Activated T-helper 2 cell treated with anti-CD3 and anti-CD28 coated beads, Interferon-gamma antibody, Interleukin-2, Interleukin-4, amounts not matched to agents 10 μg/mL and 5 μg/mL and 100 μg/mL, durations not matched to agents 14 hours and 24 hours and 36 hours (primary cell): ENCODE measurements at regions of chrX and their contacts with region 1.

Region 1: DNA sequence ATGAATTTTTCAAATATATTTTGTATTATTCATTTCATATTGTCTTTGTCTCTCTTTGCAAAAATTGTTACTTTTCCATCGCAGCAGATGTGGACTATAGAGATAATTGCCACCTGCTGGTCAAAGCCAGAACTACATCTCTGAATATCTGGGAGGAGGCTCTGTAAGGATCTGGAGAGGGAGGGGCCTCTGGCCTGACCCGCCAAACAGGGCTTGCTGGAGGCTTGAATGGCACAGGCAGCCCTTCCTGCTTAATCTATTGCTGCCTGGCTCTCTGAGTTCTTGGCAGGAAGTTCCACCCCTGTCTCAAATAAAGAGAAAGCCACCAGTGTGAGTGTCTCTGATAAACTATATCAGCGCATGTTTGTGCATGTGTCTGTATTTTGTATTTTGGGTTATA is 132.4 kb downstream of the ZMAT1 start:
- DNase-seq: peak; percentile 71
- H3K4me3 Mint-ChIP-seq: peak overlapping the region; percentile 70
- H3K27ac Mint-ChIP-seq: peak overlapping the region; percentile 62
- H3K4me1 Mint-ChIP-seq: peaks cover 2% of the 10 kb centered on the region
- H3K27me3 Mint-ChIP-seq: no peaks in the 10 kb centered on the region

Region 2: DNA sequence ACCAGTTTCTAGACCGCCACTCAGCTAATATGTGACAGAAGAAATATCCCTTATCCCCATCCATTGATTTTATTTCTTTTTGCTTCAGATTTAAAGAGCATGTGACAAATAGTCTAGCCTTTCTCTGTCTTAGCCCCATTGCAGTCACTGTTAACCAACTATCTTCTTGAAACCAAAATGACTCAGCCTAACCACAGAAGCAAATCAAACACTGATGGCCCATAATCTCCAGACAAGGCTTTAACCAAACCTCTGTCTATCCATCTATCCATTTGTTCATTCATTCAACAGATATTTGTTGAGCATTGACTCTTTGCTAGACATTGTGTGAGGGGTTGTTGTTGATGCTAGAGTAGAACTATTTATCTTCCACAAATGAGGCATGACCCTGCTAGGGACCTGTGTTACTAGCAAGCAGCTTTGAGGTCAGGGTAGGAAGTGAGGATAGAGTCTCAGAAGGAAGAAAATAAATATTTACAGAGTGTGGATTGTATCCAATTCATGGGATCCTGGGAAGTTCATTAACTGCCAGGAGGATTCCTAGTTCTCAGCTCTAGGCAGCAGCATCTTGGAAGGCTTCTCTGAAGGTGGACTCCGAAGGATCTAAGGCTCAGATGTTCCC is 368.8 kb before region 1 on chrX:
- intact Hi-C with region 1: loop called (anchors 5 kb)
- DNase-seq: no peak
- H3K4me3 Mint-ChIP-seq: peak overlapping the region; percentile 28
- H3K27ac Mint-ChIP-seq: peak overlapping the region; percentile 86
- H3K4me1 Mint-ChIP-seq: peaks cover 15% of the 10 kb centered on the region
- H3K27me3 Mint-ChIP-seq: no peaks in the 10 kb centered on the region

Region 3: GRCh38 chrX:101595739-101596419 is 203.5 kb before region 1 on chrX:
- intact Hi-C with region 1: loop called (anchors 5 kb)
- DNase-seq: no peak
- H3K4me3 Mint-ChIP-seq: no peak overlapping the region
- H3K27ac Mint-ChIP-seq: no peak overlapping the region
- H3K4me1 Mint-ChIP-seq: no peaks in the 10 kb centered on the region
- H3K27me3 Mint-ChIP-seq: peaks cover 8% of the 10 kb centered on the region

Region 4: DNA sequence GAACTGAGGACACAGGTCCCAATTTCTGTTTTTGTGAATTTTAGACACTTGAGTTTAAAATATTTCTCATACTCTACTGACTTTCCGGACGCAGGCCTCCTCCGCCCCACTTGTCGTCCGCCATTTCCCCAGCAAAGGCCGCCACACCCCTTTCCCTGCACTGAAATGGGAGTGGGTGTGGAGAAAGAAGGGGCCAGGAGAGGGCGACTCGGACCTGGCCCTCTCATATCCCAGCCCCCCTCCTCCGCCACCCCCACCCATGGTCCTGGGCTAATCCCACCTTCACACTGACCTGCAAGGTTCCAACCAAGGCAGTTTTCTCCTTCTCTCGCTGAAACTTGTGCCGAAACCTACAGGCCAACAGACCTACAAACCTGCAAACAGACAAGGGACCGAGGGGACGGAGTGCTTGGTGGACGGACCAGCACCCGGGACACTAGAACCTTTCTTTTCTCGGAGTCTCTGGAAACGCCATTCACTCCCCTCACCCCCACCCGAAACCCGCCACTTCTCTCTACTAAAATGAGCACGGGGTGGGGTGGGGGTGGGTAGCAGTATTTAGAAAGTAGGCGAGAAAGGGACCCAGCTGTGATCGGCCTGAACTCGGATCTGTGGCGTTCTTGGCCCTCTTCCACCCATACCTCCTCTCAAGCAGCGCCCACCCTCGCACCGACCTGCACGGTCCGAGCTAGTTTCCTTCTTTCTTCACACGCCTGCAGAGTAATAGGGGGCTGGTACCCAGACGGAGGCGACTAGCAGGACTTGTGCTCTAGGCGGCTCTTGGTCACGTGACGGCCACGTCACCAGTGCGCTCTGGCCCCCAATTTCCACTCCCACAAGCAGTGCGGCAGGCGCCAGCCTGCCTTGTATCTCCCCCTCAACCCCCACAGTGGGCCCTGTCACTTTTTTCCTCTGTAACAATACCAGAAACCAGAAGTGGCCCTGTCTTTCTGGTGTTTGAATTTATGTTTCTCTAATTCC is 181.9 kb before region 1 on chrX and contains the start of gene ARMCX6:
- intact Hi-C with region 1: loop called (anchors 5 kb)
- DNase-seq: peak; percentile 71
- H3K4me3 Mint-ChIP-seq: peak within 1 kb of the TSS; percentile 90
- H3K27ac Mint-ChIP-seq: peak within 1 kb of the TSS; percentile 90
- H3K4me1 Mint-ChIP-seq: peaks cover 43% of the 10 kb centered on the region
- H3K27me3 Mint-ChIP-seq: no peaks in the 10 kb centered on the region
- total RNA-seq, gene ARMCX6: 92.1 and 94.5 TPM in 2 replicates

Region 5: GRCh38 chrX:101931488-101932248 is 132.3 kb after region 1 on chrX and contains the start of gene ZMAT1:
- intact Hi-C with region 1: loop called (anchors 5 kb)
- DNase-seq: peak; percentile 82
- H3K4me3 Mint-ChIP-seq: peak within 1 kb of the TSS; percentile 84
- H3K27ac Mint-ChIP-seq: peak within 1 kb of the TSS; percentile 89
- H3K4me1 Mint-ChIP-seq: peaks cover 9% of the 10 kb centered on the region
- H3K27me3 Mint-ChIP-seq: no peaks in the 10 kb centered on the region
- total RNA-seq, gene ZMAT1: 1.7 and 2.5 TPM in 2 replicates